Mammary epithelial cell (primary cell): ENCODE measurements at regions of chr16 and their contacts with region 1.

Region 1: GRCh38 chr16:85592700-85593493 is 20.2 kb upstream of the GSE1 start:
- DNase-seq: no peak
- H3K4me3 ChIP-seq: no peak overlapping the region
- H3K27ac ChIP-seq: no peak overlapping the region
- H3K4me1 ChIP-seq: no peaks in the 10 kb centered on the region
- H3K27me3 ChIP-seq: no peaks in the 10 kb centered on the region
- CTCF ChIP-seq: no peak

Region 2: GRCh38 chr16:85536073-85536410 is 56.9 kb before region 1 on chr16:
- CTCF ChIA-PET with region 1: no interaction called
- dilution Hi-C with region 1: loop called (anchors 5 kb)
- in situ Hi-C with region 1: no loop called
- intact Hi-C with region 1: no loop called
- DNase-seq: no peak
- H3K4me3 ChIP-seq: no peak overlapping the region
- H3K27ac ChIP-seq: no peak overlapping the region
- H3K4me1 ChIP-seq: no peaks in the 10 kb centered on the region
- H3K27me3 ChIP-seq: no peaks in the 10 kb centered on the region
- CTCF ChIP-seq: no peak

Region 3: GRCh38 chr16:85645021-85645664 is 52.2 kb after region 1 on chr16:
- CTCF ChIA-PET with region 1: no interaction called
- dilution Hi-C with region 1: loop called (anchors 5 kb)
- in situ Hi-C with region 1: no loop called
- intact Hi-C with region 1: no loop called
- DNase-seq: peak; percentile 47
- H3K4me3 ChIP-seq: no peak overlapping the region
- H3K27ac ChIP-seq: no peak overlapping the region
- H3K4me1 ChIP-seq: peaks cover 20% of the 10 kb centered on the region
- H3K27me3 ChIP-seq: no peaks in the 10 kb centered on the region
- CTCF ChIP-seq: no peak